ENCODE measurements at regions of chr4 and their contacts with region 1.

Region 1: GRCh38 chr4:181443021-181443420 is 800.2 kb upstream of the TENM3 start:
- DNase-seq: no peak
- ATAC-seq: no peak
- H3K4me3 ChIP-seq: no peak overlapping the region
- H3K27ac ChIP-seq: no peak overlapping the region
- H3K4me1 ChIP-seq: no peaks in the 10 kb centered on the region
- H3K27me3 ChIP-seq: no peaks in the 10 kb centered on the region
- CTCF ChIP-seq: no peak
- EP300 ChIP-seq: no peak
- POLR2A ChIP-seq: no peak
- RAD21 ChIP-seq: no peak

Region 2: GRCh38 chr4:181890031-181890430 is 447.0 kb after region 1 on chr4:
- CTCF ChIA-PET with region 1: no interaction called
- POLR2A ChIA-PET with region 1: no interaction called
- in situ Hi-C with region 1: no loop called
- intact Hi-C with region 1: no loop called
- DNase-seq: no peak
- ATAC-seq: no peak
- H3K4me3 ChIP-seq: no peak overlapping the region
- H3K27ac ChIP-seq: no peak overlapping the region
- H3K4me1 ChIP-seq: no peaks in the 10 kb centered on the region
- H3K27me3 ChIP-seq: no peaks in the 10 kb centered on the region; a peak in 1 of 5 replicates
- CTCF ChIP-seq: no peak
- EP300 ChIP-seq: no peak
- POLR2A ChIP-seq: no peak
- RAD21 ChIP-seq: no peak

Region 3: GRCh38 chr4:182225257-182225852 is 782.3 kb after region 1 on chr4:
- CTCF ChIA-PET with region 1: no interaction called
- POLR2A ChIA-PET with region 1: no interaction called
- in situ Hi-C with region 1: no loop called
- intact Hi-C with region 1: loop called (anchors 5 kb)
- DNase-seq: no peak
- ATAC-seq: no peak
- H3K4me3 ChIP-seq: no peak overlapping the region
- H3K27ac ChIP-seq: no peak overlapping the region
- H3K4me1 ChIP-seq: no peaks in the 10 kb centered on the region
- H3K27me3 ChIP-seq: 0 out of 5 replicates have a peak, but pooled peaks cover 0 to 10% of the 10 kb centered on the region in 2 experiments
- CTCF ChIP-seq: no peak
- EP300 ChIP-seq: no peak
- POLR2A ChIP-seq: no peak
- RAD21 ChIP-seq: no peak